CD8-positive, alpha-beta T cell (primary cell): ENCODE measurements at regions of chr1 and their contacts with region 1.

Region 1: GRCh38 chr1:108746372-108747205 is at the start of gene STXBP3:
- DNase-seq: peak; percentile 99 to 100 (median 100)
- ATAC-seq: peak; percentile 92
- H3K4me3 ChIP-seq: peak within 1 kb of the TSS; percentile 72 to 98
- H3K4me3 Mint-ChIP-seq: peak within 1 kb of the TSS; percentile 98
- H3K27ac ChIP-seq: peak within 1 kb of the TSS; percentile 82 to 97
- H3K27ac Mint-ChIP-seq: peak within 1 kb of the TSS; percentile 99
- H3K4me1 ChIP-seq: peaks cover 26% of the 10 kb centered on the region
- H3K4me1 Mint-ChIP-seq: peaks cover 34% of the 10 kb centered on the region
- H3K27me3 ChIP-seq: no peaks in the 10 kb centered on the region
- H3K27me3 Mint-ChIP-seq: no peaks in the 10 kb centered on the region
- CTCF ChIP-seq: peak; percentile 84
- total RNA-seq, gene STXBP3: 49.0 to 50.4 TPM

Region 2: GRCh38 chr1:108559215-108560186 is 187.1 kb before region 1 on chr1 and contains the start of gene EEIG2:
- CTCF ChIA-PET with region 1: interaction called, 3 read pairs
- POLR2A ChIA-PET with region 1: no interaction called
- intact Hi-C with region 1: loop called (anchors 2 to 5 kb)
- DNase-seq: peak; percentile 86 to 95 (median 89)
- ATAC-seq: peak; percentile 92
- H3K4me3 ChIP-seq: peak within 1 kb of the TSS; percentile 56 to 72
- H3K4me3 Mint-ChIP-seq: peak within 1 kb of the TSS; percentile 94
- H3K27ac ChIP-seq: peak within 1 kb of the TSS; percentile 41 to 69
- H3K27ac Mint-ChIP-seq: peak within 1 kb of the TSS; percentile 93
- H3K4me1 ChIP-seq: peaks cover 27% of the 10 kb centered on the region
- H3K4me1 Mint-ChIP-seq: peaks cover 45% of the 10 kb centered on the region
- H3K27me3 ChIP-seq: no peaks in the 10 kb centered on the region
- H3K27me3 Mint-ChIP-seq: no peaks in the 10 kb centered on the region
- CTCF ChIP-seq: peak; percentile 69
- total RNA-seq, gene EEIG2: 11.0 to 11.5 TPM

Region 3: GRCh38 chr1:108708691-108709660 is 37.6 kb before region 1 on chr1:
- CTCF ChIA-PET with region 1: interaction called, 3 read pairs
- POLR2A ChIA-PET with region 1: interaction called, 3 read pairs
- intact Hi-C with region 1: loop called (anchors 2 to 5 kb)
- DNase-seq: peak; percentile 44 to 83 (median 71)
- ATAC-seq: peak; percentile 83
- H3K4me3 ChIP-seq: no peak overlapping the region
- H3K4me3 Mint-ChIP-seq: no peak overlapping the region
- H3K27ac ChIP-seq: no peak overlapping the region
- H3K27ac Mint-ChIP-seq: no peak overlapping the region
- H3K4me1 ChIP-seq: peaks cover 16% of the 10 kb centered on the region
- H3K4me1 Mint-ChIP-seq: peaks cover 30% of the 10 kb centered on the region
- H3K27me3 ChIP-seq: no peaks in the 10 kb centered on the region
- H3K27me3 Mint-ChIP-seq: no peaks in the 10 kb centered on the region
- CTCF ChIP-seq: peak; percentile 57

Region 4: GRCh38 chr1:108758796-108759195 is 12.2 kb after region 1 on chr1:
- CTCF ChIA-PET with region 1: no interaction called
- POLR2A ChIA-PET with region 1: no interaction called
- intact Hi-C with region 1: no loop called
- DNase-seq: no peak
- ATAC-seq: no peak
- H3K4me3 ChIP-seq: no peak overlapping the region
- H3K4me3 Mint-ChIP-seq: no peak overlapping the region
- H3K27ac ChIP-seq: no peak overlapping the region
- H3K27ac Mint-ChIP-seq: no peak overlapping the region
- H3K4me1 ChIP-seq: no peaks in the 10 kb centered on the region
- H3K4me1 Mint-ChIP-seq: peaks cover 13% of the 10 kb centered on the region
- H3K27me3 ChIP-seq: no peaks in the 10 kb centered on the region
- H3K27me3 Mint-ChIP-seq: no peaks in the 10 kb centered on the region
- CTCF ChIP-seq: no peak

Region 5: GRCh38 chr1:108791790-108792189 is 45.2 kb after region 1 on chr1:
- CTCF ChIA-PET with region 1: no interaction called
- POLR2A ChIA-PET with region 1: no interaction called
- intact Hi-C with region 1: no loop called
- DNase-seq: no peak
- ATAC-seq: no peak
- H3K4me3 ChIP-seq: no peak overlapping the region
- H3K4me3 Mint-ChIP-seq: no peak overlapping the region
- H3K27ac ChIP-seq: no peak overlapping the region
- H3K27ac Mint-ChIP-seq: no peak overlapping the region
- H3K4me1 ChIP-seq: no peaks in the 10 kb centered on the region
- H3K4me1 Mint-ChIP-seq: no peaks in the 10 kb centered on the region
- H3K27me3 ChIP-seq: no peaks in the 10 kb centered on the region
- H3K27me3 Mint-ChIP-seq: no peaks in the 10 kb centered on the region
- CTCF ChIP-seq: no peak

Region 6: DNA sequence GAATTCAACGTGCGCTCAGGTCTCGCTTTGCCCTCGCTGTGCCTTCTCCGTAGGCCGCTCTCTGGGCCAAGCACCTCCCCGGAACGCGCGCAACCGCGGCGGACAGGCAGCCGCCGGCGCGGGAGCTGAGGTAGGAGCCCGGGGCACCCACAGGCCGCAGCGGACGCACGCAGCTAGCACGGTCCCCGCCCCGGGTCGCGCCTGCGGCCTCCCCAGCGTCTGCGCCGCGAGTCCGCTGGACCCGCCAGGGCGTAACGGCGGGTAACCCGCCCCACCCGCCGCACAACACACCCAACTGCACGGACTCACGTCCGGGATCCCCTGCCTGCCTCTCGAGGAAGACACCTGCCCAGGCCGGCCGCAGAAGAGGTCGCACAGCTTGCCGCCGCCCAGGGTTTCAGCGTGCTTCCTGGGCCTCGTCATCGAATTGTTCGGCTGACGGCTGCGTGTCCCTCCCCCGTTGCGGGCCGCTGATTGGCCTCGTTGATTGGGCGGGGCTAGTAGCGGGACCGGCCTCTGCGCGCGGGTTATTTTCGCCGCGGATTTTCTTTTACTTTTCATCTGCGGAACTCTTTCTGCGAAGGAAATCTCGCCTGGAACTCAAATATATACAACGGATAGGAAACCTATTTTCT is 216.6 kb after region 1 on chr1 and contains the start of gene CLCC1:
- CTCF ChIA-PET with region 1: no interaction called
- POLR2A ChIA-PET with region 1: no interaction called
- intact Hi-C with region 1: loop called (anchors 1 to 5 kb)
- DNase-seq: peak; percentile 83 to 96 (median 91)
- ATAC-seq: peak; percentile 87
- H3K4me3 ChIP-seq: peak within 1 kb of the TSS; percentile 57 to 86
- H3K4me3 Mint-ChIP-seq: peak within 1 kb of the TSS; percentile 87
- H3K27ac ChIP-seq: peak within 1 kb of the TSS; percentile 75 to 88
- H3K27ac Mint-ChIP-seq: peak within 1 kb of the TSS; percentile 92
- H3K4me1 ChIP-seq: peaks cover 24% of the 10 kb centered on the region
- H3K4me1 Mint-ChIP-seq: peaks cover 39% of the 10 kb centered on the region
- H3K27me3 ChIP-seq: no peaks in the 10 kb centered on the region
- H3K27me3 Mint-ChIP-seq: no peaks in the 10 kb centered on the region
- CTCF ChIP-seq: no peak
- total RNA-seq, gene CLCC1: 4.6 to 5.8 TPM

Region 7: DNA sequence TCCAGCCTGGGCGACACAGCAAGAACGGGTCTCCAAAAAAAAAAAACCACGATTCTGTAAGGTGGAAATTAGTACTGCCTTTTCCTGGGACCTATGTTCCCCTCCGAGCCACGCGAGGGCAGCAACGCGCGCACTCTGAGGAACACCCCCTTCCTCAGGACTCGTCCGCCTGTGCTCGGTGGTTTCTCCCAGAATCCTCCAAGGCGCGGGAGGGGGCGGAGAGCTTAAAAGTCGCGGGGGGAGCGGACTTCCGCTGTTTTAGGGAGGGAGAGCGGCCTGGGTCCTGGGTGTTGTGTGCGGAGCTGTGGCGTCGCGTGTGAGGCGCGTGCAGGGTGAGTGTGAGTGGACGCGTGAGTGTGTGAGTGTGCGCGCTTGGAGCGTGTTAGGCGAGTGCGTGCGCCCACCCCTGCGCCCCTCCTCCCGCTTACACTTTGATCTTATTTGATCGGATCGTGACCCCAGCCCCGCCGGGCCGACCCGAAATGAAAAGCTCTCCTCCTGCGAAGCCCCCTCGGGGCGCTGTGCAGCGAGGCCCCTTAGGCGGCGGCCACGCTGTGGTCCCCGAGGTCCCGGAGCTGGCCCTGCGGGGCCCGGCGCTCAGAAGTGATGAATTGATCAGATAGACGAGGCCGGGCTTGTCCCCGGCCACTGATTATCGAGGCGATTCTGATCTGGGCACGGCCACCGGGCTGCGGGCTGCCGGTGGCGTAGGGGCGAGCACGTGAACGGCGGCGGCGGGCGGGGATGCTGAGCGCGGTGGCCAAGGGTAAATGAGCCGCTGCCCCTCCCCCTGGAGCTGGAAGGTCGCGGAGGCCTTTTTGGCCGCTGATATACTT is 353.6 kb after region 1 on chr1:
- CTCF ChIA-PET with region 1: no interaction called
- POLR2A ChIA-PET with region 1: no interaction called
- intact Hi-C with region 1: loop called in 1 of 2 experiments (anchors 5 kb)
- DNase-seq: peak; percentile 95 to 98 (median 97)
- ATAC-seq: peak; percentile 91
- H3K4me3 ChIP-seq: peak overlapping the region; percentile 88 to 93
- H3K4me3 Mint-ChIP-seq: peak overlapping the region; percentile 98
- H3K27ac ChIP-seq: peak overlapping the region; percentile 86 to 93
- H3K27ac Mint-ChIP-seq: peak overlapping the region; percentile 99
- H3K4me1 ChIP-seq: peaks cover 9% of the 10 kb centered on the region
- H3K4me1 Mint-ChIP-seq: peaks cover 18% of the 10 kb centered on the region
- H3K27me3 ChIP-seq: no peaks in the 10 kb centered on the region
- H3K27me3 Mint-ChIP-seq: no peaks in the 10 kb centered on the region
- CTCF ChIP-seq: peak; percentile 83